ENCODE measurements at regions of chr18 and their contacts with region 1.

Region 1: DNA sequence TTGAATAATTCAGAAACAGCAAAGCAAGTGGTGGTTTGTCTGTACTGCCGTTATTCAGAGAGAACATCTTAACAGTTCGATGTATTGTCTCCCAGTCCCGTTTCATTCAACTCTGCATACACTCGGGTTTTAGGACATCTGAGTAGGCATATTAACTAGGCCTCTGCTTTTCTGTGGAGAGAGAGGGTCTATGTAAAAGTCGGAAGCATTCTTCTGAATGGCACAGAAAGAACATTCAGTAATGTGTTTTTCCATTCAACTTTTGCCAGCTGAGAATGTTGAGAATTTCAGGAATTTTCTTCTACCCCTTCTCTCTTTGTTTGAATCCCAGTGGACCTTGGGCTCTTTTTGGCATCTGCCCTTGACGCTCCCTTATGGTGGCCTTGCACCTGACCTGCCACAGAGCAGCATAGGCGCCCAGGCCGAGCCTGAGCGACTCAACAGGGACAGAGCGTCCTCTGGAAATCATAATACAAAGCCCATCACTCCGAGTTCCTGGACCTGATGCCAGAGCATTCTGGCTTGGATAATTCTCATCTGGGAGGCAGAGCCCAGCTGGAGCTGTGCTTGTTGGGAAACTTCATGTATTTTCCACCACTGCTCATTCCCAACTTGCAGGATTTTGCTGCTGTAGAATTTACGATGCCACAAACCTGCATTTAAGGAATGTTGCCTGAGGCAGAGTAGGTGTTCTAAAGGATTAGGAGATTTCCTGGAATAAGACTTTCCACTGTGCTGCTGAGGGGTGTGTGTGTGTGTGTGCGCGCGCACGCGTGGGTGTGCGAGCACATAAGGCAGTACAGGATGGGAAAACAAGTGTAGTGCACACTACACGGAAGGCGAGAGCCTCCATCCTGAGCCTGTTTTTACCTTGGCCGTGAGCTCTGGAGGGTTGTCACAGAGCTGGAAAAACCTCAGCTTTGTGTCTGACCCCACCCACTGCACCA is 77.2 kb upstream of the TXNDC2 start:
- DNase-seq: peak; percentile 45
- H3K27ac ChIP-seq: peak overlapping the region; percentile 80
- CTCF ChIP-seq: no peak

Region 2: GRCh38 chr18:9661564-9661963 is 147.0 kb before region 1 on chr18:
- CTCF ChIA-PET with region 1: interaction called, 11 read pairs
- POLR2A ChIA-PET with region 1: no interaction called
- DNase-seq: no peak
- H3K27ac ChIP-seq: no peak overlapping the region
- CTCF ChIP-seq: no peak; the same call in 1 of the 2 replicates

Region 3: DNA sequence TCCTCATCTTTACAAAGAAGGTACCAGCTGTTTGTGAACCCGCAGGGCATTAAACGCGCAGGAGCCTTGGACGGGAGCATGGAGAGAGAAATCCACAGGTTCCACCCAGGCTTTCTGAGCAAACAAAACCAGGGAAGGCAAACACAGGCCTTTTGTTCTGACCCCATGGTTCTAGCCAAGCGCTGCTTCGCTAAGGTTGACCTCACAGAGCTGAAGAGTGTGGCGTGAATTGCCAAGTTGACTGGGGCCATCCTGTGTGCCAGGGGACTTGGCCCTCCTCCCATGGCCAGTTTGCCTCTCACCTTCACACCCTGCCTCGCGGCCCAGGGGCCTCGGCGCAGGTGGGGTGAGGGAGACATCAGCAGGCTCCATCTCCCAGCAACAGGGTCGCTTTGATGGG is 179.4 kb after region 1 on chr18:
- CTCF ChIA-PET with region 1: no interaction called
- POLR2A ChIA-PET with region 1: no interaction called
- DNase-seq: no peak
- H3K27ac ChIP-seq: no peak overlapping the region
- CTCF ChIP-seq: no peak

Measured in RWPE1 (cell line).